IMR-90 (cell line): ENCODE measurements at regions of chr6 and their contacts with region 1.

Region 1: GRCh38 chr6:112253841-112254816 is at the start of gene LAMA4:
- DNase-seq: peak; percentile 69
- ATAC-seq: peak; percentile 69
- H3K4me3 ChIP-seq: peak within 1 kb of the TSS; percentile 89
- H3K27ac ChIP-seq: peak within 1 kb of the TSS; percentile 89
- H3K4me1 ChIP-seq: peaks cover 6% of the 10 kb centered on the region
- H3K27me3 ChIP-seq: no peaks in the 10 kb centered on the region
- CTCF ChIP-seq: no peak
- POLR2A ChIP-seq: peak; percentile 52; the same call in 1 of the 2 replicates
- RAD21 ChIP-seq: peak; percentile 2; the same call in 1 of the 2 replicates
- total RNA-seq, gene LAMA4: 29.7 and 35.8 TPM in 2 replicates

Region 2: GRCh38 chr6:112180095-112180820 is 73.9 kb before region 1 on chr6:
- CTCF ChIA-PET with region 1: interaction called, 6 read pairs
- POLR2A ChIA-PET with region 1: no interaction called
- dilution Hi-C with region 1: no loop called
- in situ Hi-C with region 1: no loop called
- intact Hi-C with region 1: loop called (anchors 2 kb)
- DNase-seq: peak; percentile 92
- ATAC-seq: peak; percentile 66; the same call in 1 of the 2 replicates
- H3K4me3 ChIP-seq: no peak overlapping the region
- H3K27ac ChIP-seq: no peak overlapping the region
- H3K4me1 ChIP-seq: peaks cover 3% of the 10 kb centered on the region; the same call in 1 of the 2 replicates
- H3K27me3 ChIP-seq: no peaks in the 10 kb centered on the region
- CTCF ChIP-seq: peak; percentile 79
- POLR2A ChIP-seq: no peak
- RAD21 ChIP-seq: peak; percentile 91

Region 3: DNA sequence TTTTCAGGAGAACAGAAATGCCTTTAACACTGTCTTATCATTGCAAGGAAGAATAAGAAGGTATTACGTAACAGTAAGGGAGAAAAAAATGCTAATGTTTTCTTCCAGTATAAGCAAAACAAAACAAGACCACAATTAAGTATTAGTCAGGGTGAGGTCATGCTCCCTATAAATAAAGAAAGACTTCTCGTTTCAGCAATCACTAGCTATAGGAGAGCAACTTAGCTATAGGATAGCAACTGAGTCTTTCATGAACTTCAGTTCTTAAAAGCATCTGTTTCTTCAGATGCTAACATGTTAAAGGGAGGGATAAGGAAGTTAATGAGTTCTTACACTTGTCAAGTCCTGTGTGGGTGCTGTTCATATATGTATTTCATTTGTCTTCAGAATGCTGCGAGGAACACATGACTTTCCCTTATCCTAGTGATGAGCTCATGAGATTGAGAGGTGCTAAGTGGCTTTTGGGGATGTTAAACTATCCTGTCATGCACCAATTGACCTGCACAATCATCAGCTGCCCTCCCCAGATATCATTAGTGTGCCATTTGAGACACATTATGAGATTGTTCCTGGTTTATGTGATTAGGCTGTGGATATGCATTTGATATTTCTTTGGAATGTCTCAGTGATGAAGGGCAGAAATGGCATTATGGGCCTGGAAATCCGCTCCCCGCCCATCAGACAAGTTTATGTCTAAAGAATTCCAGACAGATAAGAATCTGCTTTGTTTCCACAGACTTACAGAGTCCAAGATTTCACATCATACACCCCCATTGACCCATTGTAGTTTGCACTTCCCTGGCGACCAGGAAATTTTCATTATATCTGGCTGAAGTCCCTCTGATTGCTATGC is 37.2 kb before region 1 on chr6:
- CTCF ChIA-PET with region 1: no interaction called
- POLR2A ChIA-PET with region 1: no interaction called
- dilution Hi-C with region 1: no loop called
- in situ Hi-C with region 1: no loop called
- intact Hi-C with region 1: loop called (anchors 5 kb)
- DNase-seq: peak; percentile 95
- ATAC-seq: peak; percentile 85
- H3K4me3 ChIP-seq: no peak overlapping the region
- H3K27ac ChIP-seq: peak overlapping the region; percentile 85
- H3K4me1 ChIP-seq: peaks cover 23% of the 10 kb centered on the region
- H3K27me3 ChIP-seq: no peaks in the 10 kb centered on the region
- CTCF ChIP-seq: no peak
- POLR2A ChIP-seq: no peak
- RAD21 ChIP-seq: no peak

Region 4: DNA sequence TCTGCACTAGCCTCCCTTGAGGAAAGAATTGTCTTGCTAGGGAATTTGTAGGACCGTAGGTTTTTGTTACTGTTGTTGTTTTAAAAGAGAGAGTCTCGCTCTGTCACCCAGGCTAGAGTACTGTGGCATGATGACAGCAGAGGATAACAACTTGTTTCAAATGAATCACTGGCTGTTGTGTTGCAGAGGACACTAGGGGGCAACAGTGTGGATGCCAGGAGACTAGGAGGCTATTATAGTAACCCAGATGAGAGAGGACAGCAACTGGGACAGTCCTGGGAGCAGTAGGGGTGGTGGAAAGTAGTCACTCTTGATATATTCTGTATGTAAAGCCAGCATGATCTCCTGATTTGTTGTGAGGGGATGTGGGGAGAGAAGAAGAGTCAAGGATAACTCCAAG is 42.0 kb after region 1 on chr6:
- CTCF ChIA-PET with region 1: no interaction called
- POLR2A ChIA-PET with region 1: interaction called, 3 read pairs
- dilution Hi-C with region 1: no loop called
- in situ Hi-C with region 1: no loop called
- intact Hi-C with region 1: loop called (anchors 1 kb)
- DNase-seq: peak; percentile 67
- ATAC-seq: peak; percentile 13
- H3K4me3 ChIP-seq: no peak overlapping the region
- H3K27ac ChIP-seq: no peak overlapping the region
- H3K4me1 ChIP-seq: peaks cover 29% of the 10 kb centered on the region
- H3K27me3 ChIP-seq: no peaks in the 10 kb centered on the region
- CTCF ChIP-seq: peak; percentile 65
- POLR2A ChIP-seq: no peak
- RAD21 ChIP-seq: peak; percentile 57

Region 5: DNA sequence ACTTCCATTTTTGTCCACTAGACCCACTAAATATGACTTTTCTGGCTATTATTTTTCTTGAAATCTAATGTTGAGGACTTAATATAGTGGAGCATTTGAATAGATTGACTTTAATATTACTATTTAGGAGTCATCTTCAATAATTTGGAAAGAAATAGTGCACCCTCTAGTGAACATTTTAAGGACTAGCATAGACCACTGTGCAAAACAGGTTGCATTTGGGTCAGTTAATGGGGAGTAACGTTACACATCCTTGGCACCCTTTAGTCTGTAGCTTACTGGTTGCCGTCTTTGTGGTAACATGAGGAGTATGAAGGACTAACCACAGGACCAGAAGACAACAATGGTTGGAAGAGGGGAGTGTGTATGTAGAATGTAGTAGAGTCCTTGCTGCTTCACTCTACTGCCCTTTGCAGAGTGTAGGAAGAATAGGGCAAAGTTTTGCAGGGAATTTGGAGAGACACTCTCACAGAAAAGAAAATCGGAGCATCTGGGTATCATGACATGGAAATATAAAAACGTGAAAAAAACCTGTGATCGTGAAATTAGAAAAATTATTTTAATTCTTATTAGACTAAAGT is 118.2 kb after region 1 on chr6:
- CTCF ChIA-PET with region 1: no interaction called
- POLR2A ChIA-PET with region 1: no interaction called
- dilution Hi-C with region 1: no loop called
- in situ Hi-C with region 1: no loop called
- intact Hi-C with region 1: loop called (anchors 2 kb)
- DNase-seq: peak; percentile 46
- ATAC-seq: peak; percentile 93
- H3K4me3 ChIP-seq: no peak overlapping the region
- H3K27ac ChIP-seq: no peak overlapping the region
- H3K4me1 ChIP-seq: no peaks in the 10 kb centered on the region
- H3K27me3 ChIP-seq: peaks cover 11% of the 10 kb centered on the region
- CTCF ChIP-seq: peak; percentile 63
- POLR2A ChIP-seq: no peak
- RAD21 ChIP-seq: peak; percentile 63